Activated naive CD4-positive, alpha-beta T cell treated with anti-CD3 and anti-CD28 coated beads for 36 hours (primary cell): ENCODE measurements at regions of chr10 and their contacts with region 1.

Region 1: DNA sequence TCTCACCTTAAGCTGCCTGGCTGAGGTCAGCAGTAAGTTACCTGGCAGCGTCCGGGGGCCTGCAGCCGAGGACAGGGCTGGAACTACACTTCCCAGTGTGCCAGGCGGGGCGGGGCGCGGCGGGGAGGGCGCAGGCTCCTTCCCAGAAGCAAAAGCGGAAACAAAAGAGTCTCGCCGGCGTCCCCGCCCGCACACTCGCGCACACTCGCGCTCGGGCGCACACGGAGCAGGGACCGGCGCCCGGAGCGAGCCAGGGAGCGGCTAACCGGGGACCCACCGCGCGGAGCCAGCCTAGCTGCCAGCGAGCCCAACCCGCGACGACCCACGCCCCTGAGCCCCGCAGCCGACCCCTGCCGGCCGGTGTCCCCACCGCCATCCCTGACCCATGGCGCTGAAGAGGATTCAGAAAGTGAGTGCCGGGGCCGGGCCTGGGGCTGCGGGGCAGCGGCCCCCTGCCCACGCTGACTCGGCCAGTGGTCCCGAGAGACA is at the start of gene UBE2D1:
- DNase-seq: peak; percentile 88
- H3K4me3 Mint-ChIP-seq: peak within 1 kb of the TSS; percentile 95
- H3K27ac Mint-ChIP-seq: peak within 1 kb of the TSS; percentile 78
- H3K4me1 Mint-ChIP-seq: peaks cover 33% of the 10 kb centered on the region
- H3K27me3 Mint-ChIP-seq: no peaks in the 10 kb centered on the region
- total RNA-seq, gene UBE2D1: 8.7 to 9.3 TPM

Region 2: GRCh38 chr10:58237014-58237830 is 97.6 kb before region 1 on chr10:
- CTCF ChIA-PET with region 1: no interaction called
- intact Hi-C with region 1: loop called (anchors 1 kb)
- DNase-seq: peak; percentile 23
- H3K4me3 Mint-ChIP-seq: no peak overlapping the region
- H3K27ac Mint-ChIP-seq: peak overlapping the region; percentile 89
- H3K4me1 Mint-ChIP-seq: peaks cover 47% of the 10 kb centered on the region
- H3K27me3 Mint-ChIP-seq: no peaks in the 10 kb centered on the region

Region 3: DNA sequence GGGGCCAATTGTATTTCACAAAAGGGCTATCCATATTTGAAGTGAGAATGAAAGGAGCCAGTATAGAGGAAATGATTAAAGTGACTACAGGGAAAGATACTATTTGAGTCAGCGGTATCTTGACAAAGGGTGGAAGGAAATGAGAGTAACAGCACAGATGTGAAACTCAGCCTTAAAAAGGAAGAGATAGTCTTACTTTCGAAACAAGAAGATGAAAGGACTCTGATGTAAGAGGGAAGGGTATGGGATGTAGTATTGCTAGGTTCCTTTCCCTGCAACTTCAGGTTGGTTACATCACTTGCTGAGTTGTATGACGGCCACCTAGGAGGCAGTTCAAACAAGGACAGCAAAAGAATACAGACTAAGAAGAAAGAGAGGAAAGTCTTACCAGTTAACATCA is 52.2 kb before region 1 on chr10:
- CTCF ChIA-PET with region 1: interaction called, 3 read pairs
- intact Hi-C with region 1: loop called (anchors 2 kb)
- DNase-seq: peak; percentile 68
- H3K4me3 Mint-ChIP-seq: peak overlapping the region; percentile 57
- H3K27ac Mint-ChIP-seq: peak overlapping the region; percentile 91
- H3K4me1 Mint-ChIP-seq: peaks cover 41% of the 10 kb centered on the region
- H3K27me3 Mint-ChIP-seq: no peaks in the 10 kb centered on the region

Region 4: GRCh38 chr10:58299580-58299979 is 35.3 kb before region 1 on chr10:
- CTCF ChIA-PET with region 1: interaction called, 5 read pairs
- intact Hi-C with region 1: loop called (anchors 2 kb)
- DNase-seq: peak; percentile 78
- H3K4me3 Mint-ChIP-seq: no peak overlapping the region
- H3K27ac Mint-ChIP-seq: no peak overlapping the region
- H3K4me1 Mint-ChIP-seq: no peaks in the 10 kb centered on the region
- H3K27me3 Mint-ChIP-seq: peaks cover 5% of the 10 kb centered on the region

Region 5: GRCh38 chr10:58358314-58358933 is 23.6 kb after region 1 on chr10:
- CTCF ChIA-PET with region 1: no interaction called
- intact Hi-C with region 1: loop called (anchors 2 kb)
- DNase-seq: no peak
- H3K4me3 Mint-ChIP-seq: no peak overlapping the region
- H3K27ac Mint-ChIP-seq: no peak overlapping the region
- H3K4me1 Mint-ChIP-seq: peaks cover 28% of the 10 kb centered on the region
- H3K27me3 Mint-ChIP-seq: no peaks in the 10 kb centered on the region

Region 6: GRCh38 chr10:58384999-58385783 is 50.3 kb after region 1 on chr10 and contains the start of gene TFAM:
- CTCF ChIA-PET with region 1: interaction called, 15 read pairs
- intact Hi-C with region 1: loop called (anchors 1 kb)
- DNase-seq: peak; percentile 98
- H3K4me3 Mint-ChIP-seq: peak within 1 kb of the TSS; percentile 100
- H3K27ac Mint-ChIP-seq: peak within 1 kb of the TSS; percentile 97
- H3K4me1 Mint-ChIP-seq: peaks cover 36% of the 10 kb centered on the region
- H3K27me3 Mint-ChIP-seq: no peaks in the 10 kb centered on the region
- total RNA-seq, gene TFAM: 87.7 to 91.8 TPM

Region 7: DNA sequence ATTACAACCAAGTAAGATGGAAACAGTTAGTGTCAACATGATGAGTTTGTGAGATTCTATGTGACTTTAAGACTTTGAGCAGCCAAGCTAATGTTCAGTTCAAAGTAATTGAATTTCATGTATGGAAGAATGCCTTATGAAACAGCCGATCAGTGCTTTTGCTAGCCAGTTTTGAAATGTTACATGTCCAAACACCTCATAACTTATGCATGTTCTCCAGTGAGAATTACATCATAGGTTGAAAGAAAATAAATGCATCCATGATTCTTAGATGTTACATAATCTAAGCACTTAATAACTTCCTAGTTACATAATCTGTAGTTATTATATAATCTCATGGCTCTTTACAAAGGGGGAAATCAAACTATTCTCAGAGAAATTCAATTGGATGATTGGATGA is 389.1 kb after region 1 on chr10:
- CTCF ChIA-PET with region 1: no interaction called
- intact Hi-C with region 1: no loop called
- DNase-seq: no peak
- H3K4me3 Mint-ChIP-seq: no peak overlapping the region
- H3K27ac Mint-ChIP-seq: no peak overlapping the region
- H3K4me1 Mint-ChIP-seq: no peaks in the 10 kb centered on the region
- H3K27me3 Mint-ChIP-seq: no peaks in the 10 kb centered on the region